Dorsolateral prefrontal cortex (tissue), 120 donors: ENCODE measurements at regions of chr2 and their contacts with region 1.

Region 1: DNA sequence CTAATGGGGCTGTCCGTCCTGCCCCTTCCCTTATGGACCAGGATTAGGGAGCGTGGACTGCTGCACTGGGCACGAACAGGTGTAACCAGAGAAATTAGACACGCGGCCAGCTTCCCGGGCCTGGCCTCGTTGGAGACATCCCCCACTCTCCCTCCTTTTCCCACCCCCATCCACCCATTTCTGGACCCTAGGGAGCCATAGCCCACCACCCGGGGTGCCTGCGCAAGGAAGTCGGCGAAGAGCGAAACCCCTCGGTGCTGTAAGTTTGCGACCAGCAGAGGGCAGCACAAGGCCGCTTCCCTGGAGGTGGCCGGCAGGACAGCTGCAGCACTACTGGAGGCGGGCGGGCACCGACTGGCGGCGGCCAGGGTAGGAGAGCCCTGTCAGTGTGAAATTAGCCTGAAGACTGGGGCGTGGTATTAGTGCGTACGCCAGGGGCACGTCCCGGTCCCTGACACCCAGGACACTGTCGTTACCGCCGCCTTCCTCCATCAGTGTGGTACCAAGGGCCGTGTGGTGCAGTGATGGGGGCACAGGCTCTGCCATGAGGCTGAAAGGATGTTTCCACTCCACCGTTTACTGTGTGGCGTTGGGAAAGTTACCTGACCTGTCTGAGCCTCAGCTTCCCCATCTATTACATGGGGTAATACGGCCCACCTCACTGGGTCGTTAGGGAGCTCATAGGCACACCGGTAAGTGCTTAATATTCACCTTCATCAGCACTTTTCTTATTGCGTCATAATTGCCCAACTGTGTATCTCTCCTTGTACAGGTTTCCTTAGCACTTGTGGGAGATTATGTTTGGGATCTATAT is 36.0 kb upstream of the CD207 start:
- DNase-seq: peak; percentile 65 to 83 (median 72)
- H3K4me3 ChIP-seq: peak overlapping the region in 32 of 59 donors; percentile 9 to 57 (median 31)
- H3K27ac ChIP-seq: no peak overlapping the region
- H3K27me3 ChIP-seq: peaks cover 0 to 63% (median 44%) of the 10 kb centered on the region in 45 donors
- CTCF ChIP-seq: peak; percentile 58 to 98 (median 90)

Region 2: DNA sequence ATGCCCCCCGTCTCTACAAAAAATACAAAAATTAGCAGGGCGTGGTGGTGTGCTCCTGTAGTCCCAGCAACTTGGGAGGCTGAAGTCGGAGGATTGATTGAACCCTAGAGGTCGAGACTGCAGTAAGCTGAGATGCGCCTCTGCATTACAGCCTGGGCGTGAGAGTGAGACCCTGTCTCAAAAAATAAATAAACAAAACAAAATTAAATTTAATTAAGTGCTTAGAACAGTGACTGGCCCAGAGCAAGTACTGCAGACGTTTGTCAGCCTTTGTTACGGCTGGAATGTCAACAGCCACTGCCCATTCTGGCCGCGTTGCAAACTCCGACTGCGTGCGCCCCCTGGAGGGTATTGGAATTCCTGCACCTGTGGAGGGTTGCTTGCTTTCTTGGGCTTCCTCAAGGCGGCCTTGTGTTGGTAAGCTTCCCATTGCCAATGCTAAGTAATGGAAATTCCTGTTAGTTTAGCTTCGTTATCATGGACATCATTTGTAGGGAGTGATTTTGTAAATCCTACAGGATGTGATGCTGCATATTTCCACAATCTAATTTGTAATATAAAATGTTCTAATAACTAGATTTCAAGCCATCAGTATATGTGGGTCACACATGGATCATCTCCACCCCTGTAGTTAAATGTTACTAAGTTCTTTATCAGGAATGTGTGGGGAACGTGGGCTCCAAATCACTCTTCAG is 48.2 kb after region 1 on chr2:
- intact Hi-C with region 1: loop called in 1 of 2 experiments (anchors 2 kb)
- DNase-seq: peak in 8 of 10 donors; percentile 45 to 80 (median 66)
- H3K4me3 ChIP-seq: no peak overlapping the region
- H3K27ac ChIP-seq: no peak overlapping the region
- H3K27me3 ChIP-seq: peaks cover 0 to 29% (median 4%) of the 10 kb centered on the region in 45 donors
- CTCF ChIP-seq: peak; percentile 52 to 92 (median 81)